ENCODE measurements at regions of chr17 and their contacts with region 1.

Region 1: GRCh38 chr17:33712120-33712519 is 419.0 kb upstream of the ASIC2 start:
- DNase-seq: no peak
- H3K4me3 ChIP-seq: no peak overlapping the region
- H3K27ac ChIP-seq: no peak overlapping the region
- H3K4me1 ChIP-seq: no peaks in the 10 kb centered on the region
- H3K27me3 ChIP-seq: no peaks in the 10 kb centered on the region; the same call in 1 of the 2 replicates

Region 2: DNA sequence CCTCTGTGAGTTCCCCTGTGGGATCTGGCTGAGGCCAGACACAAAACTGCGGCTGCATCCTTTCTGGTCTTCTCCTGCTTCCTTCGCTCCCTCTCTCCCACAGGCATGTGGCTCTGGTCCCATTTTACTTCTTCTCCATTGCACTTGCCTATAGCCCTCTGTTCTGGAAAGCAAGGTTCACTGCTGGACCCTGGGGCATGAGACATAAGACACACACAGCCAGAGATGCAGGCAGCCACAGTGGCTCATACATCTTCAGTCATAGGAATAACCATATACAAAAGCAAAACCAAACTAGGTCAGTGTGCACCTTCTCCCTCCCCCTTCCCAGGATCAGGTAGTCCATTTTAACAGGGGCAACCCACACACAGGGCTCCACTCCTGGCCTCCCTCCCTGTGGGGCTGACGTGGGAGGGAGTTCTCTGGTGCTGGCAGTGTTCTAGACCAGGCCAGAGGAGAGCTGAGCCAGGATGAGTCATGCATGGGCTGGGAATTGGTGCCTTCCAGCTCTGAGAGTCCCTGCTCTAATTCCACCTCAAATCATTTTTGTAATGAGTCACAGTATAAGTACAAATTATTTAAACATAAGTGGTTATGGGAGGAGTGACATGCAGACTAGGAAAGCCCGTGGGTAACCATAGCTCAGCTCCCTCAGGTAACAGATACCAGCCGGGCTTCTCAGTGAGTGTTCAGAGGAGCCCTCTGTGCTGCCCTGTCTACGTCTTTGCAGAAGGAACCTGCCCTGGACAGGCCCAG is 477.0 kb before region 1 on chr17:
- in situ Hi-C with region 1: no loop called
- DNase-seq: peak; percentile 96
- H3K4me3 ChIP-seq: no peak overlapping the region
- H3K27ac ChIP-seq: no peak overlapping the region
- H3K4me1 ChIP-seq: peaks cover 10% of the 10 kb centered on the region; the same call in 1 of the 2 replicates
- H3K27me3 ChIP-seq: no peaks in the 10 kb centered on the region

Region 3: DNA sequence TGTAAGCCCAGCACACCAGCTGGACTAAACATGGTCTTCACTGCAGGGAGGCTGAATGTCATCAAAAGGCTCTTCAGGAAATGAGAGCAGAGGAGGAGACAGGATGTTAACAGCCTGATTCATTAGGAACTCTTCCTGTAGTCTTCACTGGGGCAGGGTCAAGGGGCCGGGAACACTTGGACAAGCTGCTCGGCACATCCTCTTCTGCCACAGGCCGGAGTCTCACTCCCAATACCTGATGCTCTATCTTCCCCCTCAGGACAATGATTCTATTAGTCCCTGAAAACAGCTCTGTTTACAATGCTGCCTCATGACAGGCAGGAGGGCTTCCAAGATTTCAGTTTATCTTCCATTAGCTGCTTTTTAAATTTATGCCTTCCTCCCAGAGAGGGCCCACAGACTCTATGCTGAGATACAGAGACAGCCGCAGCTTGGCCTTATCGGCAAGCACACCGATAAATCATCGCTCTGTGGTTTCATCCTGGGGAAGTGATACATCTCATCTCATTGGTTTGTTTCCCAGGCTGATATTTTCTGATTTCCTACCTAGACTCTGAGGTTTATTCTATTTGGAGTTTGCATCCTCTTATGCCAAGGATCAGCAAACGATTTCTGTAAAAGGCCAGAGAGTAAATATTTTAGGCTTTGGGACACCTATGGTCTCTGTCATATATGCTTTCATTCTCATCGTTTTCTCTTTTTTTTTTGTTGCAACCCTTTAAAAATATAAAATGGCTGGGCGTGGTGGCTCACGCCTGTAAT is 205.1 kb before region 1 on chr17:
- in situ Hi-C with region 1: no loop called
- DNase-seq: no peak
- H3K4me3 ChIP-seq: no peak overlapping the region
- H3K27ac ChIP-seq: no peak overlapping the region
- H3K4me1 ChIP-seq: no peaks in the 10 kb centered on the region
- H3K27me3 ChIP-seq: no peaks in the 10 kb centered on the region; the same call in 1 of the 2 replicates

Region 4: DNA sequence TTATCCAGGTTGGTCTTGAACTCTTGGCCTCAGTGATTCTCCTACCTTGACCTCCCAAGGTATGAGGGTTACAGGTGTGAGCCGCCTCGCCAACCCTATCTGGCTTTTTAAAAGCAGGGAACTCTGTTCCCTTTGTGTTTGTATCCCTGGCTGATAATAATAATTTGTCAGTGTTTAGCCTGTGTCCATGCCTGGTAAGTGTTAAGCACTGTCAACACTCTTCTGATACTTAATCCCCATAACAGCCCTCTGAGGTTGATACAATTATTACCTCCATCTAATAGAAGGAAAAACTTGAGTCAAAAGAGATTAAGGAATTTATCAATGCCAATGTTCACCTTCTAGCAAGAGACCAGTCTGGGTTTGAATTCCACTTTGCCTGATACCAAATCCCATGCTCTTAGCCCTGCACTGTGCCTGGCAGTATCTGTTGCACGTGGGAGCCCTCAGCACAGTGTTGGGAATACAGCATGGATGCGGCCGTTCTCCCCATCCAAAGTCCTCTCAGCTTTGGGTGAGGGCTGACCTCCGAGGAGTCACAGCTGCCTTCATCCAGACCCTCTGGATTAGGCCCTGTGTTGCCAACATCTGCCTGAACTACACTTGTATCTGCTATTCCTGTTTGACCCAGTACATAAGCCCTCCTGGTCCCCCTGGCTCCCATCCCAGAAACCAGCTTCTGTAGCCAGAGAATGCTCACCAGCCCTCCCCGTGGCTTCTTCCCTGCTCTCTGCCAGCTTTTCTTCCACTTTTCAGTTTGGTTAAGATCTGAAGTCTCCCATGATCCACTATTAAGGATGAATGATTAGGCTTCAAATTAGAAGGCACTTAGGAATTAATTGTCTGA is 83.4 kb before region 1 on chr17:
- in situ Hi-C with region 1: no loop called
- DNase-seq: no peak
- H3K4me3 ChIP-seq: no peak overlapping the region
- H3K27ac ChIP-seq: no peak overlapping the region
- H3K4me1 ChIP-seq: no peaks in the 10 kb centered on the region
- H3K27me3 ChIP-seq: no peaks in the 10 kb centered on the region

Region 5: GRCh38 chr17:33769066-33769465 is 56.9 kb after region 1 on chr17:
- in situ Hi-C with region 1: loop called (anchors 5 kb)
- DNase-seq: no peak
- H3K4me3 ChIP-seq: no peak overlapping the region
- H3K27ac ChIP-seq: no peak overlapping the region
- H3K4me1 ChIP-seq: no peaks in the 10 kb centered on the region
- H3K27me3 ChIP-seq: no peaks in the 10 kb centered on the region

Region 6: DNA sequence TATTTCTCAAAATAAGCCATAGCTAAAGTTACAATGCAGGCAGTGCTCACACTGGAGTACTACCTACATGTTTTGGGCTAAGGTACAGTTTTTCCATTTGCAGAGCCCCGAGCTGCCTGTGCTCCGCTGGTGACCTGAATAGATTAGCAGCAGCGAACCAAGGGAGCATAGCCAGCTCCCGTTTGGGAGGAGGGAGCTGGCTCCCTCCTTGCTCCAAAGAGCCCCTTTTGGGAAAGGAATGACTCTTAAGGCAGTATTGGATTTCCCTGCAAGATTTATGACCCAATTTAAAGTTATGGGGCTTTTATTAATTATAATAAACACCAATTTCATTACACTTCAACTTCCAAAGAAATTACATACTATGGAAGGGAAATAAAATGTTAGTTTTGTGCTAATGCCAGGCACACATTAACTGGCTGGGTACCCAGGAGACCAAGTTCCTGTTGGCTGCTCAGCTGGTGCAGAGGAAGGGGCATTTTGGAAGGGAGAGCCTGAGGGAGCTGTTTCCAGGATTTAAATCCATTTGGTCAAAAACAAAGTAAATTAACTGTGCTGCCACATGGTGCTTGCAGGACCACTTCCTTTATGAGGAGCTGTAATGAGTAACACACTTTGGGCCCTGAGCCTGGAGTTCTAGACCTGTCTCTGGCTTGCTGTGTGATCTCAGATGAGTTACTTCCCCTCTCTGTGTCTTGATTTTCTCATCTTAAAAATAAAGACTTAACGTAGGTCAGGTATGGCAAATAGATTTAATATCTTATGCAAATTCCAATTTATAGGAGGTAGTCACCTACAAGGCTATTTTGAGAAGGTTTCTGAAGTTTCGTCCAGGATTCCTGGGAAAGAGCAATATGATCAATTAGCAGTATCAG is 180.8 kb after region 1 on chr17:
- in situ Hi-C with region 1: no loop called
- DNase-seq: no peak
- H3K4me3 ChIP-seq: no peak overlapping the region
- H3K27ac ChIP-seq: no peak overlapping the region
- H3K4me1 ChIP-seq: peaks cover 4% of the 10 kb centered on the region; the same call in 1 of the 2 replicates
- H3K27me3 ChIP-seq: no peaks in the 10 kb centered on the region

Region 7: GRCh38 chr17:34892461-34893249 is 1180.5 kb after region 1 on chr17:
- in situ Hi-C with region 1: loop called (anchors 25 kb)
- DNase-seq: peak; percentile 37
- H3K4me3 ChIP-seq: no peak overlapping the region
- H3K27ac ChIP-seq: no peak overlapping the region
- H3K4me1 ChIP-seq: no peaks in the 10 kb centered on the region
- H3K27me3 ChIP-seq: no peaks in the 10 kb centered on the region; the same call in 1 of the 2 replicates

Measured in GM23248 (cell line).